B cell (primary cell): ENCODE measurements at regions of chr2 and their contacts with region 1.

Region 1: DNA sequence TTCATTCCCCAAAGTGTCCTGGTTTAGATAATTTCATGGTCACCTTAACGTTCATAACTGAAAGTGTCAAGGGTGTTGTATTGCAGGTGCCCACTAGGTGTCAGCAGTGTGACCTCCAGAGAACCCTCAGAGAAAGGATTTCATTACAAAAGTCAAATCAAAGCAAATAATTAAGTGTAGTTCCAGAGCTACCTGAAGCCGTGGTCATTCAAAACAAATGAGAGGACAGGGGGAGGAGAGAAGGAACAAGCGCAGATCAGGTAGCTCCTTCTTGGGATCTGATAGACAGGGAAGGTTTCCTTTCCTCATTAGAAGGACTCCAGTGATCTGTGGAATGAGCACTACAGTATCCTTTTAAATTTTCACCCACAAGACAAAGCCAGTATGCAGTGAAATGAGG is at the start of gene SLC9A4:
- DNase-seq: peak; percentile 55
- ATAC-seq: peak; percentile 51
- H3K4me3 ChIP-seq: no peak within 1 kb of the TSS
- H3K4me3 Mint-ChIP-seq: no peak within 1 kb of the TSS
- H3K27ac ChIP-seq: no peak within 1 kb of the TSS
- H3K27ac Mint-ChIP-seq: no peak within 1 kb of the TSS
- H3K4me1 ChIP-seq: no peaks in the 10 kb centered on the region
- H3K4me1 Mint-ChIP-seq: no peaks in the 10 kb centered on the region
- H3K27me3 ChIP-seq: peaks cover 0 to 17% (median 2%) of the 10 kb centered on the region in 4 experiments
- H3K27me3 Mint-ChIP-seq: peaks cover 30% of the 10 kb centered on the region
- CTCF ChIP-seq: peak; percentile 97
- total RNA-seq, gene SLC9A4: 0.07 and 0.20 TPM in 2 replicates

Region 2: GRCh38 chr2:102342891-102343290 is 130.1 kb before region 1 on chr2:
- CTCF ChIA-PET with region 1: no interaction called
- POLR2A ChIA-PET with region 1: no interaction called
- intact Hi-C with region 1: no loop called
- DNase-seq: no peak
- ATAC-seq: no peak
- H3K4me3 ChIP-seq: no peak overlapping the region
- H3K4me3 Mint-ChIP-seq: no peak overlapping the region
- H3K27ac ChIP-seq: no peak overlapping the region
- H3K27ac Mint-ChIP-seq: no peak overlapping the region
- H3K4me1 ChIP-seq: no peaks in the 10 kb centered on the region
- H3K4me1 Mint-ChIP-seq: no peaks in the 10 kb centered on the region
- H3K27me3 ChIP-seq: peaks cover 0 to 10% (median 0%) of the 10 kb centered on the region in 4 experiments
- H3K27me3 Mint-ChIP-seq: peaks cover 19% of the 10 kb centered on the region
- CTCF ChIP-seq: no peak

Region 3: GRCh38 chr2:102460467-102460866 is 12.6 kb before region 1 on chr2:
- CTCF ChIA-PET with region 1: interaction called, 17 read pairs
- POLR2A ChIA-PET with region 1: no interaction called
- intact Hi-C with region 1: no loop called
- DNase-seq: no peak
- ATAC-seq: no peak
- H3K4me3 ChIP-seq: no peak overlapping the region
- H3K4me3 Mint-ChIP-seq: no peak overlapping the region
- H3K27ac ChIP-seq: no peak overlapping the region
- H3K27ac Mint-ChIP-seq: no peak overlapping the region
- H3K4me1 ChIP-seq: no peaks in the 10 kb centered on the region
- H3K4me1 Mint-ChIP-seq: no peaks in the 10 kb centered on the region
- H3K27me3 ChIP-seq: peaks cover 0 to 4% (median 0%) of the 10 kb centered on the region in 4 experiments
- H3K27me3 Mint-ChIP-seq: peaks cover 36% of the 10 kb centered on the region
- CTCF ChIP-seq: no peak

Region 4: DNA sequence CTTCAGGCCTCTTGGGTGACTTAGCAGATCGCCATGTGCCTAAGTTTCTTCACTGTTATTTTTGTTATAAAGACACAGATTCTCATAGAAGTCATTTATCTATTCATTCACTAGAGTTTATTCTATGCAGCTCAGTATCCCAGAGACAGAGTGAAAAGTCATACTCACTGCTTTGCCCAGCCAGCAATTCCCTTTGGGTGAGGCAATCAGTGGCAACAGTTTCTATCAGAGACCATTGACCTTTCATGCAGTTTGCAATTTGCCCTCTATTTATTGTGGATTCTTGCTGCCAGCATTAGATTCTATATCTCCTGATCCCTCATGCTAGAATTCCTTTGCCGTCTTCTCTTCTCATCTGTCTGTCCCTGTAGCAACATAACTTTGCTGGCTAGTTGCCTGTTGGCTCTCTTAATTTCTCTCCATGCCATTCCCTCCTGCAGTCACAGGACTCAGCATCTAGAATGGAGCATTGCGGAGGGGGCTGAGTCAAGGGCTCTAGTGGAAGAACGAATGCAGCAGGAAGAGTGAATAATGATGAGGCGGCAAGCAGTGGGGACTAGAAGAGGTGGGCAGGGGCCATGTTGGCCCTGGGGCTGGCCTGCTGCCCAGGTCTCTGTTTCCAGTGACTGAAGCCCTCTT is 12.2 kb after region 1 on chr2:
- CTCF ChIA-PET with region 1: interaction called, 24 read pairs
- POLR2A ChIA-PET with region 1: no interaction called
- intact Hi-C with region 1: no loop called
- DNase-seq: no peak
- ATAC-seq: no peak
- H3K4me3 ChIP-seq: no peak overlapping the region
- H3K4me3 Mint-ChIP-seq: no peak overlapping the region
- H3K27ac ChIP-seq: no peak overlapping the region
- H3K27ac Mint-ChIP-seq: no peak overlapping the region
- H3K4me1 ChIP-seq: no peaks in the 10 kb centered on the region
- H3K4me1 Mint-ChIP-seq: peaks cover 1% of the 10 kb centered on the region
- H3K27me3 ChIP-seq: peaks cover 0 to 16% (median 2%) of the 10 kb centered on the region in 4 experiments
- H3K27me3 Mint-ChIP-seq: peaks cover 47% of the 10 kb centered on the region
- CTCF ChIP-seq: no peak

Region 5: DNA sequence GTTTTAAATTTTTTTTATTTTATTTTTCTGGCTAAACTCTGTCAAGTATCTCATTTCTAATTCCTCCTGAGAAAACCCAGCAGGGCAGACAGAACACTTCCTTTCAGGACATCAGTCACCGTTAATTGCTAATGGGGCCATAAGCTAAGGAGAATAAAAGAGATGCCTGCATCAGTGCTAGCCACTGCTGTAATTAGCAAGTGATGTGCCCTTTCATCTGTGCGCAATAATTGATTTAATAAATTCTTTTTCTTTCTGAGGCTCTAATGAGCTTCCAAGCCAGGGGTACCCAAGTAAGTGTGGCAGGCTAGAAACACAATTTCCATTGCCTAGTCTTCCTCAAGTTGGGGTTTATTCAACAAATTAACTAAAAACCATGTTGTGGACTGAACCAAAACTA is 65.5 kb after region 1 on chr2:
- CTCF ChIA-PET with region 1: no interaction called
- POLR2A ChIA-PET with region 1: no interaction called
- intact Hi-C with region 1: no loop called
- DNase-seq: no peak
- ATAC-seq: no peak
- H3K4me3 ChIP-seq: no peak overlapping the region
- H3K4me3 Mint-ChIP-seq: no peak overlapping the region
- H3K27ac ChIP-seq: no peak overlapping the region
- H3K27ac Mint-ChIP-seq: no peak overlapping the region
- H3K4me1 ChIP-seq: no peaks in the 10 kb centered on the region
- H3K4me1 Mint-ChIP-seq: no peaks in the 10 kb centered on the region
- H3K27me3 ChIP-seq: peaks cover 0 to 2% (median 0%) of the 10 kb centered on the region in 4 experiments
- H3K27me3 Mint-ChIP-seq: peaks cover 32% of the 10 kb centered on the region
- CTCF ChIP-seq: no peak

Region 6: GRCh38 chr2:102615622-102616436 is 142.8 kb after region 1 on chr2:
- CTCF ChIA-PET with region 1: interaction called, 43 read pairs
- POLR2A ChIA-PET with region 1: no interaction called
- intact Hi-C with region 1: loop called (anchors 1 kb)
- DNase-seq: peak; percentile 37
- ATAC-seq: no peak
- H3K4me3 ChIP-seq: no peak overlapping the region
- H3K4me3 Mint-ChIP-seq: no peak overlapping the region
- H3K27ac ChIP-seq: no peak overlapping the region
- H3K27ac Mint-ChIP-seq: no peak overlapping the region
- H3K4me1 ChIP-seq: peaks cover 5 to 10% of the 10 kb centered on the region in 2 donors
- H3K4me1 Mint-ChIP-seq: peaks cover 9% of the 10 kb centered on the region
- H3K27me3 ChIP-seq: peaks cover 0 to 31% (median 18%) of the 10 kb centered on the region in 4 experiments
- H3K27me3 Mint-ChIP-seq: peaks cover 44% of the 10 kb centered on the region
- CTCF ChIP-seq: peak; percentile 74

Region 7: DNA sequence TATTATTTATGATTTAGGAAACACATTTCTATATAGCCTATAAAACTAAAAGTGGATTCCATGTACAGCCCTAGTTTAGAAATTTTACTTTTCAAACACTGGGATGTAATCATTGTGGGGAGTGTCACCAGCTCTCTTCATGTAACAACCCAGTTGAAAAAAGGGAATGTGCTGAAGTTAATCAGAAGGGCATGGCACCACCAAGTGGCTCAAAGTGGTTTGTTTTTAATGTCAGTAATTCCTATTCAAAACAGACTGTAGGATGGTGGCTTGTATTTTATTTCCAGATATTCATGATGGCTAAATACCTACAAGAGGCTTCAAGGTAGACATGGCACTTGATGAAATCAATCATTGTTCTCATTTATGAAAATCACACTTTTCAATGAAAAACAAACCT is 230.7 kb after region 1 on chr2:
- CTCF ChIA-PET with region 1: interaction called, 4 read pairs
- POLR2A ChIA-PET with region 1: no interaction called
- intact Hi-C with region 1: loop called (anchors 2 kb)
- DNase-seq: no peak
- ATAC-seq: no peak
- H3K4me3 ChIP-seq: no peak overlapping the region
- H3K4me3 Mint-ChIP-seq: no peak overlapping the region
- H3K27ac ChIP-seq: no peak overlapping the region
- H3K27ac Mint-ChIP-seq: no peak overlapping the region
- H3K4me1 ChIP-seq: no peaks in the 10 kb centered on the region
- H3K4me1 Mint-ChIP-seq: no peaks in the 10 kb centered on the region
- H3K27me3 ChIP-seq: peaks cover 0 to 7% (median 1%) of the 10 kb centered on the region in 4 experiments
- H3K27me3 Mint-ChIP-seq: peaks cover 18% of the 10 kb centered on the region
- CTCF ChIP-seq: no peak

Region 8: DNA sequence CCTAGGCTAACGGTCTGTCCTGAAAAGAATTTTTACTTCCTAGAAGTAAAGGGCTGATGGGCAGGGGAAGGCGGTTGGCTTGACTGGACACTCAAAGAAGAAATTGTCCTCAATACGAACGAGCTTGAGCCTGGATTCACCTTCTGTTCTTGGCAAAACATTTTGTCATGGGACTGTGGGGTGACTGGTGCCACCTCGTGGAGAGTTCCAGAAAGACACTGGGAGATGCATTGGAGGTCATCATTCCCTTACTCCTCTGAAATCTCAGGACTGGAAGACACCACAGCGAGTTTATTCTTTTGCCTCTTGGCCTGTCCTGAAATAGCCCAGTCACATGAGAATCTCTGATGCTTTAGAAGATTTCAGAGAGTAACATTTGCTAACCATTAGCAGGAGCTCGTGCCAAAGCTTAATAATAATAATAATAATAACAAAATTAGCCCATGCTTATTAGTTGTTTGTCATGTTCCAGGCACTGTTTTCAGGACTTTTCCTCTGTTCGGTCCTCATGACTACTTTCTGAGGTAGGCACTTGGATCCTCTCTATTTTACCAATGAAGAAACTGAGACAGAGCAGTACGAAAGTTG is 333.3 kb after region 1 on chr2:
- CTCF ChIA-PET with region 1: no interaction called
- POLR2A ChIA-PET with region 1: no interaction called
- intact Hi-C with region 1: loop called (anchors 5 kb)
- DNase-seq: peak; percentile 25
- ATAC-seq: no peak
- H3K4me3 ChIP-seq: no peak overlapping the region
- H3K4me3 Mint-ChIP-seq: no peak overlapping the region
- H3K27ac ChIP-seq: no peak overlapping the region
- H3K27ac Mint-ChIP-seq: no peak overlapping the region
- H3K4me1 ChIP-seq: no peaks in the 10 kb centered on the region
- H3K4me1 Mint-ChIP-seq: no peaks in the 10 kb centered on the region
- H3K27me3 ChIP-seq: no peaks in the 10 kb centered on the region
- H3K27me3 Mint-ChIP-seq: no peaks in the 10 kb centered on the region
- CTCF ChIP-seq: peak; percentile 74